GM13976 (cell line): ENCODE measurements at regions of chr2 and their contacts with region 1.

Region 1: GRCh38 chr2:68715353-68716041 is 19.1 kb upstream of the ARHGAP25 start:
- DNase-seq: peak; percentile 52
- CTCF ChIP-seq: peak; percentile 65

Region 2: GRCh38 chr2:68487773-68488355 is 227.6 kb before region 1 on chr2:
- in situ Hi-C with region 1: loop called (anchors 25 kb)
- DNase-seq: peak; percentile 45
- CTCF ChIP-seq: no peak